ENCODE measurements at regions of chr9 and their contacts with region 1.

Region 1: DNA sequence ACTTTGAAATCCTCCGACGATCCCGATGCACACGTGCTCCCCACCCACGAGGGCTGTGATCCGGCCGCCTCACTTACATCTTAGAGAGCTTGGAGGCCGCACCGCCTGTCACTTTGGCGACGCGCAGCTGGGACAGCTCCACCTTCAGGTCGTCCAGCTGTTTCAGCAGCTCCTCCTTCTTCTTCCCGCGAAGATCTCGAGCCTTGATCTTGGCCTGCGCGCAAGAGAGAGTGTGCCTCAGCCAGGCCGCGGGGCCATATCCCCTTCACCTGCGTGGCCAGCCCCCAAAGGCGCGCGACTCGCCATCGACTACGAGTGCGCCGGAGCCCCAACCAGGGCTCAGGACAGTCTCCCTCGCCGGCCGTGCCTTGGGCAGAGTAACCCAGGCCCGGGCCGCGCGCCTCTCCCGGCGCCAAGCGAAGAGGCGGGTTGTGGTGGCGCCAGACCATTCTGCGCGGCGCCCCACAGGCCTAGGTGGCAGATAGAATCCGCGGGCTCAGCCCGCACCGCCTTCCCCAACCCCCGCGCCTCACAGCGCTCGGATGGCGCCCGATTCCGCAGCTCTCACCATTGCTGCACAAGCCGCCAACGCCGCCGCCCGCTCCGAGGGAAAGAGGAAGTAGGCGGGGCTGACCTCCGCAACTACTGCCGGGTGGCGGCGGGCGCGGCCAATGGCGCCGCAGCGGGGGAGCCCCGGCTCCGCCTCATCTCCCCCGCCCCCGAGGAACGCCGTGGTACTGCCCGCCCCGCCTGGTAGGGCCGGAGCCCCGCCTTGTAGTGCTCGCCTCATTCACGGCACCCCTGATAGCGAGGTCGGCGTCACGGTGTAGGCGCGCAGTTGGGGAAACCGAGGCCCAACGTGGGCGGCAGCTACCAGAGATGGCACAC is at the starts of genes ARPC5L and RPL35:
- DNase-seq: peak; percentile 88
- ATAC-seq: peak; percentile 90
- H3K4me3 ChIP-seq: peak within 1 kb of the TSS; percentile 98
- H3K27ac ChIP-seq: peak within 1 kb of the TSS; percentile 58
- H3K4me1 ChIP-seq: peaks cover 26% of the 10 kb centered on the region
- H3K27me3 ChIP-seq: no peaks in the 10 kb centered on the region
- CTCF ChIP-seq: no peak; the same call in 1 of the 2 replicates
- total RNA-seq, gene ARPC5L: 54.5 and 63.0 TPM in 2 replicates
- total RNA-seq, gene RPL35: 1,981 and 2,242 TPM in 2 replicates

Region 2: GRCh38 chr9:124741662-124742061 is 119.9 kb before region 1 on chr9:
- CTCF ChIA-PET with region 1: no interaction called
- POLR2A ChIA-PET with region 1: interaction called, 10 read pairs
- intact Hi-C with region 1: no loop called
- DNase-seq: no peak
- ATAC-seq: no peak
- H3K4me3 ChIP-seq: no peak overlapping the region
- H3K27ac ChIP-seq: no peak overlapping the region
- H3K4me1 ChIP-seq: no peaks in the 10 kb centered on the region
- H3K27me3 ChIP-seq: no peaks in the 10 kb centered on the region
- CTCF ChIP-seq: no peak

Region 3: GRCh38 chr9:124873664-124874063 is 12.1 kb after region 1 on chr9:
- CTCF ChIA-PET with region 1: no interaction called
- POLR2A ChIA-PET with region 1: no interaction called
- intact Hi-C with region 1: no loop called
- DNase-seq: no peak
- ATAC-seq: no peak
- H3K4me3 ChIP-seq: no peak overlapping the region
- H3K27ac ChIP-seq: no peak overlapping the region
- H3K4me1 ChIP-seq: peaks cover 16% of the 10 kb centered on the region
- H3K27me3 ChIP-seq: no peaks in the 10 kb centered on the region
- CTCF ChIP-seq: no peak